ENCODE measurements at regions of chr14 and their contacts with region 1.

Region 1: GRCh38 chr14:90399541-90400444 is 3.0 kb downstream of the CALM1 start:
- DNase-seq: peak; percentile 92
- ATAC-seq: peak; percentile 49 to 55

Region 2: GRCh38 chr14:89736867-89737266 is 662.9 kb before region 1 on chr14:
- intact Hi-C with region 1: no loop called
- DNase-seq: no peak
- ATAC-seq: no peak

Region 3: GRCh38 chr14:90301668-90302090 is 98.1 kb before region 1 on chr14:
- intact Hi-C with region 1: loop called in 1 of 2 experiments (anchors 10 kb)
- DNase-seq: no peak
- ATAC-seq: peak; percentile 71 to 83

Region 4: GRCh38 chr14:90383075-90383730 is 16.6 kb before region 1 on chr14:
- intact Hi-C with region 1: loop called in 1 of 2 experiments (anchors 1 kb)
- DNase-seq: peak; percentile 100
- ATAC-seq: peak; percentile 93 to 96

Region 5: DNA sequence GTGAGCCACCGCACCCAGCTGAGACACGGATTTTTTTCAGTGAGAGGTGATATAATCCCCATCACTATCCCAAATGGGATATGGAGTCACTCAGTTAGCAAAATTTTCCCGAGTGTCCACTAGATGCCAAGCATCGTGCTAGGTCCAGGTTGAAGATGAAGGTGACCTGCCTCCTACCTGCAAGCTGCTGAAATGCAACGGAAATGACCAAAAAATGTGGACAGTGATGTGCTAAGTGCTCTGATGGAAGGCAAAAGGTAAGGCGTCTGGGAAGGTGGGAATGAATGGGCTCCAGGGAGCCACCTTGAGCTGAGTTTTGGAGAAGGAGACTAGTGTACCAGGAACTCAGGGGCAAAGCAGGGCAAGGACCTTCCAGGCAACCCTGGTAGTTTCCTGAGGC is 61.6 kb after region 1 on chr14:
- intact Hi-C with region 1: no loop called
- DNase-seq: no peak
- ATAC-seq: no peak

Region 6: GRCh38 chr14:90518941-90519256 is 119.1 kb after region 1 on chr14:
- intact Hi-C with region 1: loop called in 1 of 2 experiments (anchors 10 kb)
- DNase-seq: no peak
- ATAC-seq: no peak

Region 7: DNA sequence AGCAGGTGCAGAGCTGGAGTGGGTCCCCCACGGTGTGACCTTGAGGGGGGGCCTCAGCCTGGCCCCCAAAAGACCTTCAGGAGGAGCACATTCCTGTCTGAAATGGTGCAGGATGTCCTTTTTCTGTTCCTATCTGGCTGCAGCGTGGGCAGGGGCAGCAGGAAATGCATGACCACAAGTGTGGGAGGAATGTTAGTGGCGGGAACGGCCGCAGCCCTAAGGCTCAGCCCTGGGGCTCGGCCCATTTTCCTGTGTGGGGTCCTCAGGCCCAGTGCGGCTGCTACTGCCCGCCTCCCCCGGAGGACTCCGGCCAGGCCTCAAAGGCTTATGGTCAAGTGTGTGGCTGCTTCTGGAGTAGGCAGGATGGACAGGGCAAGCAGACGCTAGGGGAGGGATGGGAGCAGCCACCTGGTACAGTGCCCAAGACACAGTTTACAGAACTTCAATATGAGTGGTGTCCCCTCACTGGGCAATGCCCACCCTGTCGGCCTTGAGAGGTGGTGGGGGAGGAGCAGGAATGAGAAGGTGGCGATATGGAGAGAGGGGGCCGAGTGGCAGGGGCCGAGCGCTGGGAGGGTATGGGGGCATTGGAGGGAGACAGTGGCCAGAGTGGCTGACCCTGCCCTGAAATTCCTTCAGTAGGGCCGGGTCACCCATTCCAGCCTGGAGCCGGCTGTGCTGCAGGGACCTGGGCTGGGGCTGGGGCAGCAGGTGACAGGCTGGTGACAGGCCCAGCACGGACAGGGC is 134.5 kb after region 1 on chr14:
- intact Hi-C with region 1: loop called in 1 of 2 experiments (anchors 10 kb)
- DNase-seq: no peak
- ATAC-seq: peak; percentile 34 to 38

Region 8: DNA sequence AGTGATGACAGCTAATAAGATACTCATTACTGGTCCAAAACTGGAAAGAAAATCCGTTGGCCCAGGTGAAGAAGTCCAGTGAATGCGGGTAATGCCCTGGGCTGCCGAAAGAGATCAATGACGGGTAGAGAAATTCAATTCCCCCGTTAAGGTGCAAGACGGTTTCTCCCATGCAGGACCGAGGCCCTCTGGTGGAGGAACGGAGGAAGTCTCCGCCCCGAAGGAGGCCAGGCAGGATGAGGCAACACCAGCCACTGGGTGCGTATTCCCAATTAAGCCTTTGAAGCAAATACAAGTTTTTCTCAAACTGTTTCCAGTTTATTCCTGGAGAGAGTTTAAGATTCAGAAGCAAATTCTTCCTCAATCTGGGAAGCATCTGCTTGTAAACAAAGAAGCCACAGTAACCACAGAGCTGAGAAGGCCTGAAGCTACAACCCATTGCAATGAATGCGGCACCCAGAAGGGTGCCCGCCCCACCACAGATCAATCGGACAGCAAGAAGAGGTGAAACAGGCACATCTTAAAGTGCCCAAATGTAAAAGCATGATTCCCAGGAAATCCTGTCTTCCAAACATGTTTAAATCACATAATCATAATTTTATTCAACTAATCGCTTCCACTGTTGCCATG is 297.9 kb after region 1 on chr14:
- intact Hi-C with region 1: loop called (anchors 5 kb)
- DNase-seq: peak; percentile 84
- ATAC-seq: peak; percentile 93

Region 9: DNA sequence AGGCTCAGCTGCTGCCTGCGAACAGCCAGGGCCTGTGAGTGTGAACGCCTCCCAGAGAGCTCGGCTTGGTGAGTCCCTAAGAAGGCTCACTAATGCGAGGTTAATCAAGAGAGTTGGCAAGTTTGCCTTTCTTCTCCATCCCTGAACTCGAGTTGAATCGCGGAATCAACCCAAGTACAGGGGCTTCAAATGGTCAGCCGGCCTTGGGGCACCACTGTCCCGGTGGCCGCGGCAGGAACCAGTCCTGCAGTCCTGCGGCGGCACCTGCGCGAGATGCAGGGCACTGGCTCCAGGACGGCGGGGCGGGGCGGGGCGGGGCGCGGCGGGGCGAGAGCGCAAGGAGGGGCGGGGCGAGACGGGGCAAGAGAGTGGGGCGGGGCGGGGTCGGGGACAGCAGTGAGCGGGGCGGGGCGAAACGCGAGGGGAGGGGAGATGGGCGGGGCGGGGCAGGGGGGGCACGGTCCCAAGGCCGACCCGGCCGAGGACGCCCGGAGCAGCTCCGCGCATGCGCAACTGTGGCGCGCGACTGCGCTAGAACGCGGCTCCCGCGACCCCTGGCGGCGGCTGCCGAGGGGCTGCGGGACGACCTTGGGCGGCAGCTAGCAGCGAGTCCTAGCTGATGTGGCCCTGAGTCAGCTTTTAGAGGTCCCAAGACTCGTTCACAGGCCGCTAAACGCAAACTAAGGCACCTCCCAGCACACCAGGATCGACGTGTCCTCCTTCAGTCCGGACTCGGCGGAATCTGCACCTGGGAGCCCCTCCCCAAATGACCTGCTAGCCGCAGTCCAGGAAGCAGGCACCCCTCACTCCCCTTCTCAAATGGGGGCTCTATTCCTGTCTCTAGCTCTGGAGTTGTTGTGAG is 358.5 kb after region 1 on chr14:
- intact Hi-C with region 1: loop called in 1 of 2 experiments (anchors 10 kb)
- DNase-seq: peak; percentile 94
- ATAC-seq: peak; percentile 93

Measured in left cardiac atrium (tissue), 4 donors.